Aorta (tissue), 5 donors: ENCODE measurements at regions of chr3 and their contacts with region 1.

Region 1: DNA sequence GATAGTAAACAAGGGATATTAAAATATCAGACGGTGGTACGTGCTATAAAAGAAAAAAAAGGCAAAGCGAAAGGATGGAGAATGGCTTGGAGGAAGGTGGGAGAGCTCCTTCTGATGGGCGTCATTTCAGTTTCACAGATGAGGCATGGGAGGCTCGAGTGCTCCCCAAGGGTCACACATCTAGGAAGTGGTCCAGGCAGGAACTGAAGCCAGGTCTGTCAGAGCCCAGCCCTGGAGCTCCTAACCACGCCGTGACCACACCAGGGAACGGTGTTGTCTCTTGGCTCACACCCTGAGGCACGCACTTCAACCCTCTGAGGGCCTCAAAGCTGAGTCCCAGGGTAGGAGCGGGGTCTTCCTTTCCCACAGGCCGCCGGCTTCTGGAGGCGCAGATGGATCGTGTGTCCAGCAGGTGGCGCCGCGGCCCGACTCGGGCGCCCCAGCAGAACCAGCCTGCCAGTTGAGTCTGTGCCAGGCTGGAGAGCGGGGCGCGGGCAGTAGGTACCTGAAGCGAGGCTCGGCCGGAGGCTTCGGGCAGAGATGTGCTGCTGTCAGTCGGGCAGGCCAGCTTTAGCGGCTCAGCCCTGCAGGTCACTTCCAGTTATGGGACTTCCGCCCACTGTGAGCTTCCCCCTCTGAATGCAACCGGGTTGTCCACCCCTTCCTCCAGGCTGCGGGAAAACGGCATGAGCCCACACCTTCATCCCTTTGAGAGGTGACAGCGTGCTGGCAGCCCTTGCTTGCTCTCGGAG is 68.1 kb downstream of the SLC6A1 start:
- DNase-seq: peak; percentile 80 to 90
- ATAC-seq: peak; percentile 91
- H3K4me3 ChIP-seq: no peak overlapping the region
- H3K27ac ChIP-seq: no peak overlapping the region
- H3K4me1 ChIP-seq: no peaks in the 10 kb centered on the region
- H3K27me3 ChIP-seq: no peaks in the 10 kb centered on the region

Region 2: DNA sequence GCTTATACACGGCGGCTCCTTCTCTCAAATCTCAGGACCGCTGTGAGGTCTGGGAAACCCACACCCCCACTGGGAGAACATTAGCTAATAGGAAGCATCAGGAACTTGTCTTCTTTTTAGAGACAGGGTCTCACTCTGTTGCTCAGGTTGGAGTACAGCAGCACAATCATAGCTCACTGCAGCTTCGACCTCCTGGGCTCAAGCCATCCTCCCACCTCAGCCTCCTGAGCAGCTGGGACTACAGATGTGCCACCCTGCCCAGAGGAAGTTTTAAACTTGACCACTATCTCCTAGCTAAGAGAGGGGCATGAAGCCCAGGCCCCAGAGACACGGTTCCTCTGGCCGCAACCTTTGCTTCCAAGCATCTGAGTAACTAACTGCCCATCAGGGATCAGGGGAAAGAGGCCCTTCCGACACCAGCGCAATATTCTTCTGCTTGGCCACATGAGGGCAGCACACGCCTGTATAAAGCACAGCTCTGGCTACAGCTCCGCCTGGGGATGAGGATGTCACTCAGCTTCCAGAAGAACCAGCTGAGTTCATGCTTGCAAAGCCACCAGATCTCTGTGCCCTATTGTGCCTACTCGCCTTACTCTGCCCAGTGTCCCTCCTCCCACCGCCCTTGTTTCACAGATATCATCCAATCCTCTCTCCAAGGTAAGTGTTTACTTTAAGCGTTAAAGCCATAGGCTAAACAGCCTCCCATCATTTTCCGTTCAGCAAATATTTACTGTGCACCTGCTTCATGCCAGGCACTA is 302.2 kb before region 1 on chr3:
- intact Hi-C with region 1: loop called (anchors 2 to 10 kb)
- DNase-seq: peak in 1 of 2 donors; percentile 82
- ATAC-seq: peak; percentile 81
- H3K4me3 ChIP-seq: no peak overlapping the region
- H3K27ac ChIP-seq: no peak overlapping the region
- H3K4me1 ChIP-seq: no peaks in the 10 kb centered on the region
- H3K27me3 ChIP-seq: no peaks in the 10 kb centered on the region

Region 3: DNA sequence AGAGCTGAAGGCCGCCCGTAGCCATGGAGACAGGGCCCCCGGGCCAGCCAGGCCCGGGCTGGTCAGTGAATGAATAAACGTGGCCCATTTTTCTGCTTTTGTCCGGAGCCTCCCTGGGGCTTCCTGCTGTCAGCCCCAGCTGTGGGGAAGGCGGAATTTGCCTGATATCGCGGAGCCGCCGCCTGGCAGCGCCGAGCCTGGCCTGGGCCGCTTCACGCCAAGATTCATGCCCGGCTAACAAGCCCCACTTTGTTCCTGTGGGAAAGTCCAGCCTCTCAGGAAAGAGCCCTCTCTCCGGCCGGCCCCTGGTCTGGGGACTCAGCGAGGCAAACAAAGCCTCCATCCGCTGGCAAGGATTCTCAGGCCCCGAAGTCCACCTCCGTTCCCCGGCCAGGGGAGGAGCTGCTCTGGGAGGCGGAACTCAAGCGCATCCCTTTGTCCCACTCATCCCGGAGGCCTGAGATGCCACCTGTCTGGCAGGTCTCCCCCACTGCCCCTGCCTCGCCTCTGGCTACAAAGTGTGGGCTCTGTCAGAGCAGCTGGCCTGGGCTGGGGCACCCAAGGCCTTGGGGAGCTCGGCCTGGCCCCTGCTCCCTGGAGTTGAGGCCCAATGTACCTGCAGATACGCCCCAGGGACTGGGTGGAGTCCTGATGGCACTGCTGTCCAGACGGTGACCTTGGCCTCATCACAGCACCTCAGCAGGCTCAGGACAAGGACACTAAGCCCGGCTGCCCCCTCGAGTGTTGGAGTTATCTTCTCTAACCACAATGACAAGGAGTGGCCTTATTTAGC is 296.2 kb before region 1 on chr3:
- intact Hi-C with region 1: loop called (anchors 2 to 10 kb)
- DNase-seq: no peak
- ATAC-seq: no peak
- H3K4me3 ChIP-seq: no peak overlapping the region
- H3K27ac ChIP-seq: no peak overlapping the region
- H3K4me1 ChIP-seq: no peaks in the 10 kb centered on the region
- H3K27me3 ChIP-seq: no peaks in the 10 kb centered on the region

Region 4: DNA sequence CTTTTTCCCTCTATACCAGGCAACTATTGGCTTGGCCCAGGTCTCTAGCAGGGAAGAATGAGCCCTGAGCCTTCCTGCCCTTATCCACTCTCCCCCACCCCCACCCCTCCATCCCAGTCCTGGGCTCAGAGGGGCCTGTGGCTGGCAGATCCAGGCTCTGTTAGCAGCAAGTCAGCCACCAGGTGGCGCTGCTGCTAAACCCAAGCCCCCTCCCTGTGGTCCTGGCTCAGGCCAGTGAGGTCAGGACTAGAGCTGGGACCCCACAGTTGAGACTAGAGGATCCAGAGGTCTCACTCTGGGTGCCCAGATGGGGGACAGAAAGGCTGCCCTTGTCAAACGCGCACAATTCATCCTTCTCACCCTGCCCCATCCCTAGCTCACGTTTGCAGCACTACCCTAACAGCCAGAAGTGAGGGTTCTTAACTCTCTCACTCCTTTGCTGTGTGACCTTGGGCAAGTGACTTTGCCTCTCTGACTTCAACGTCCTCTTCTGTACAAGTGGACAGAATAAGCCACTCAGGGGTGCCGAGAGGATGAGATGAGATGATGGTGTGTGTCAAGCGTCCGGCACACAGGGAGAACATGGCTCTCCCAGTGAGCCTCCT is 114.9 kb before region 1 on chr3:
- intact Hi-C with region 1: loop called (anchors 1 to 2 kb)
- DNase-seq: peak; percentile 68 to 88
- ATAC-seq: peak; percentile 80
- H3K4me3 ChIP-seq: no peak overlapping the region
- H3K27ac ChIP-seq: no peak overlapping the region
- H3K4me1 ChIP-seq: no peaks in the 10 kb centered on the region
- H3K27me3 ChIP-seq: no peaks in the 10 kb centered on the region

Region 5: GRCh38 chr3:11134794-11135193 is 74.1 kb after region 1 on chr3:
- intact Hi-C with region 1: loop called in 1 of 2 experiments (anchors 5 kb)
- DNase-seq: no peak
- ATAC-seq: no peak
- H3K4me3 ChIP-seq: no peak overlapping the region
- H3K27ac ChIP-seq: no peak overlapping the region
- H3K4me1 ChIP-seq: peaks cover 0 to 3% of the 10 kb centered on the region in 2 donors
- H3K27me3 ChIP-seq: no peaks in the 10 kb centered on the region

Region 6: GRCh38 chr3:11221818-11222415 is 161.2 kb after region 1 on chr3:
- intact Hi-C with region 1: no loop called
- DNase-seq: no peak
- ATAC-seq: no peak
- H3K4me3 ChIP-seq: no peak overlapping the region
- H3K27ac ChIP-seq: peak overlapping the region in 1 of 2 donors; percentile 15
- H3K4me1 ChIP-seq: no peaks in the 10 kb centered on the region
- H3K27me3 ChIP-seq: no peaks in the 10 kb centered on the region

Region 7: GRCh38 chr3:11335056-11335608 is 274.5 kb after region 1 on chr3:
- intact Hi-C with region 1: loop called (anchors 2 to 5 kb)
- DNase-seq: no peak
- ATAC-seq: peak; percentile 79
- H3K4me3 ChIP-seq: no peak overlapping the region
- H3K27ac ChIP-seq: no peak overlapping the region
- H3K4me1 ChIP-seq: no peaks in the 10 kb centered on the region
- H3K27me3 ChIP-seq: no peaks in the 10 kb centered on the region